ENCODE measurements at regions of chr4 and their contacts with region 1.

Region 1: GRCh38 chr4:158809611-158810486 is 41.0 kb downstream of the FNIP2 start:
- DNase-seq: peak; percentile 77
- ATAC-seq: peak; percentile 65
- H3K4me3 ChIP-seq: peak overlapping the region; percentile 50; the same call in 1 of the 2 replicates
- H3K27ac ChIP-seq: peak overlapping the region; percentile 97
- H3K4me1 ChIP-seq: peaks cover 44% of the 10 kb centered on the region
- H3K27me3 ChIP-seq: no peaks in the 10 kb centered on the region
- CTCF ChIP-seq: no peak

Region 2: GRCh38 chr4:158729716-158730559 is 79.9 kb before region 1 on chr4:
- CTCF ChIA-PET with region 1: no interaction called
- POLR2A ChIA-PET with region 1: no interaction called
- intact Hi-C with region 1: loop called (anchors 5 kb)
- DNase-seq: peak; percentile 74
- ATAC-seq: peak; percentile 92
- H3K4me3 ChIP-seq: no peak overlapping the region
- H3K27ac ChIP-seq: no peak overlapping the region
- H3K4me1 ChIP-seq: no peaks in the 10 kb centered on the region
- H3K27me3 ChIP-seq: no peaks in the 10 kb centered on the region
- CTCF ChIP-seq: peak; percentile 87

Region 3: DNA sequence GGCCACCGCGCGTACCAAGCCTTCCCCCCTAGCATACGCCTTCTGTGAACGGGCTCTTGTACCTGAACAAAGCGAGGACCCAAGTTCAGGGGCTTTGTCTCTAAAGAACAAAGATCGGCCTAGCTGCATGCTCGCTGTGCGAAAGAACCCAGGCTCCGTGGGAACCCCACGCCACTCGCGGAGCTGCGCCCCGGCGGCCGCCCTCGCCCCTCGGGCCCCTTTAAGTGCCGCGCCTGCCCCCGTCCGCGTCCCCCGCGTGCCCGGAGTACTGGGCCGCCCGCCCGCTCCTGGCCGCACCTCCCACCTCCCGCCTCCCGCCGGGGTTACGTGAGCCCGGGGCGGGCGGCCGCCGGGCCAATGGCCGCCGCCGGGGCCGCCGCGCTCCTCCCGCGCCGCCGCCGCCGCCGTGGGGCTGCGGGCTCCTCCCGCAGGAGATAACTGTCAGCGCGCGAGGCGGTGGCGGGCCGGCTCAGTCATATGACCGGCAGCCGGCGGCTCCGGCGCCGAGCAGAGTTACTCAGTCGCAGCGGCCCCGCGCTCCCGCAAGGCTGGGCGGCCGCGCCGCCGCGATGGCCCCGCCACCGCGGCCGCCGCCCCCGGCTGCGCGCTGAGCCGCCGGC is 41.2 kb before region 1 on chr4 and contains the start of gene FNIP2:
- CTCF ChIA-PET with region 1: no interaction called
- POLR2A ChIA-PET with region 1: interaction called, 3 read pairs
- intact Hi-C with region 1: loop called (anchors 1 kb)
- DNase-seq: peak; percentile 64
- ATAC-seq: peak; percentile 84
- H3K4me3 ChIP-seq: peak within 1 kb of the TSS; percentile 96
- H3K27ac ChIP-seq: 0 out of 2 replicates have a peak within 1 kb of the TSS, but pooled peaks have one; percentile 10
- H3K4me1 ChIP-seq: peaks cover 22% of the 10 kb centered on the region
- H3K27me3 ChIP-seq: no peaks in the 10 kb centered on the region
- CTCF ChIP-seq: no peak
- total RNA-seq, gene FNIP2: 5.2 and 6.7 TPM in 2 replicates

Region 4: GRCh38 chr4:158821228-158821971 is 11.6 kb after region 1 on chr4:
- CTCF ChIA-PET with region 1: no interaction called
- POLR2A ChIA-PET with region 1: no interaction called
- intact Hi-C with region 1: loop called (anchors 1 kb)
- DNase-seq: no peak
- ATAC-seq: no peak
- H3K4me3 ChIP-seq: no peak overlapping the region
- H3K27ac ChIP-seq: no peak overlapping the region
- H3K4me1 ChIP-seq: peaks cover 46% of the 10 kb centered on the region
- H3K27me3 ChIP-seq: no peaks in the 10 kb centered on the region
- CTCF ChIP-seq: no peak

Region 5: DNA sequence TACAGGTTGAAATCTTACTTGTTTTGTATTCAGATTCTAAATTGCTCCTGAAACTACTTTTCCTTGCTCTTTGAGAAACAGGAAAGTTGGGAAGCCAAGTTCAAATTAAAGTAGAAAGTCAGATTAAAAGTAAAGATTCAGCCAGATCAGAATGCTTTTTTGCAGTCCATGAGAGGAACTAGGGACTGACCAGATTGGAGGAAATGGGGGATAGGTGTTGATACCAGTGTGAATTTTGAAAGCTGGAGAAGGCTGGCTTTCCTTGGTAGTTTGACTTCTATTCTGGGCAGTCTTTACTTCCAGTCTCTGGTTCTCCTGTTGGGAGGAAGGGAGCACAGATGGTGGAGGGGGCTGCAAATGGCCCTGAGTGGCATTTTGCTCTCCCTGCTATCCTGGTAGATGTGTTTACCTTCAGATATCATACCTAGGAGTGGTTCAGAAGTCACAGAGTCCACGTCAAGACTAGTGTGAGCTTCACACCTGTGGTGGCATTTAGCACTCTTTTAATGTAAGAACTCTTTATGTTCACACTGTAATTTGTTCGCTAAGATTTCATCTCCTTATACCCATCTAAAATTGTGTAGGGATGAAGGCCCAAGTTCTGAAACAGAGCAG is 27.8 kb after region 1 on chr4:
- CTCF ChIA-PET with region 1: no interaction called
- POLR2A ChIA-PET with region 1: interaction called, 16 read pairs
- intact Hi-C with region 1: no loop called
- DNase-seq: no peak
- ATAC-seq: no peak
- H3K4me3 ChIP-seq: no peak overlapping the region
- H3K27ac ChIP-seq: no peak overlapping the region
- H3K4me1 ChIP-seq: no peaks in the 10 kb centered on the region
- H3K27me3 ChIP-seq: no peaks in the 10 kb centered on the region
- CTCF ChIP-seq: no peak

Region 6: DNA sequence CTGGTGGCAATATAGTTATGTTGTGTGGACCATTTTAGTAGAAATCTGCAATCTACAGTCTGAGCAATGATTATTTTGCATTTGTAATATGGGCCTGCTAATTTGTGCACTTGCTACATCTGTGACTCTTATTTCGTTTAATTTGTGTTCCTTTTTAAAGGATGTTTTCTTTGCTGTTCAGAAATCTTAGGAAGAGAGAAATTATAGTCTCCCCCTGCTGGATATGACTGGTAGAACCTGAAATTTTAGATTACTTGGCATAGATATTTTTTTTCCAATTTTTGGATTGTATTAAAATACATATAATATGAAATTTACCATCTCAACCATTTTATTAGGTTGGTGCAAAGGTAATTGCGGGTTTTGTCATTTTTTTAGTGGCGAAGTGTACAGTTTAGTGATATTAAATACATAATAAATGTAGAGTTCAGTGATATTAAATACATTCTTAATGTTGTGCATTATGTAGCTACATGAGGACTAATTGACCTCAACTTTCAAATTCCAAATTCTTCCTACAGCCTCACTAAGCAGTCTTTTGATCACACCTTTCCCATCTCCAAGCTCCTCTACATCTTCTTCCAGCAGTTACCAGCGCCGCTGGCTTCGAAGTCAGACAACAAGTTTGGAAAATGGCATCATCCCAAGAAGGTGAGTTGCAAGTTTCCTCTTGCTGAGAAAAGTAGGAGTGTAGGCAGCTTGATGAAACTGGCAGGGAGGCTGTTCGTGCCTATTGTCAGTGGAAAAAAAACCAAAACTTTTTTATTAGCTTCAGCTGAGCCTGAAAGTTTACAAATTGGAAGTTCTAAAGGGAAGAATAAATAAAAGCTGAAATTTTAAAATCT is 41.2 kb after region 1 on chr4:
- CTCF ChIA-PET with region 1: no interaction called
- POLR2A ChIA-PET with region 1: no interaction called
- intact Hi-C with region 1: loop called (anchors 2 kb)
- DNase-seq: peak; percentile 61
- ATAC-seq: no peak
- H3K4me3 ChIP-seq: no peak overlapping the region
- H3K27ac ChIP-seq: no peak overlapping the region
- H3K4me1 ChIP-seq: no peaks in the 10 kb centered on the region
- H3K27me3 ChIP-seq: no peaks in the 10 kb centered on the region
- CTCF ChIP-seq: peak; percentile 66

Region 7: DNA sequence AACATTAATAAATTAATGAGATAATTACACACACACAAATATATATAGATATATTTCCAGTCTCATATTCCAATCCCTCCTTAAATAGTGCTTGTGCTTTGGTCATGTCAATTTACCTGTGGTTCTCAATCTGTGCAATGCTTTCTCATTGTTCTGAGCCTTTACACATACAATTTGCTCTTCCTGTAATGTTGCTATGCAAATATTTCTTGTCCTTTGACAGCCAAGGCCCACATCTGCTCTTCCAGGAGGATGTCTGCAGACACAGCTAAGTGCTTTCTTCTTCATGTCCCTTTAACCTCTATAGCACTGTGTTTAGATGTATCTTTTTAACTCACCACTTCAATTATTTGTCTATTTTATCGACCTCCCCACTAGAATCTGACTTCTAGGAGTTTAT is 225.7 kb after region 1 on chr4:
- CTCF ChIA-PET with region 1: no interaction called
- POLR2A ChIA-PET with region 1: no interaction called
- intact Hi-C with region 1: no loop called
- DNase-seq: no peak
- ATAC-seq: no peak
- H3K4me3 ChIP-seq: no peak overlapping the region
- H3K27ac ChIP-seq: no peak overlapping the region
- H3K4me1 ChIP-seq: no peaks in the 10 kb centered on the region
- H3K27me3 ChIP-seq: no peaks in the 10 kb centered on the region
- CTCF ChIP-seq: no peak

Measured in PC-3 (cell line).